Activated naive CD4-positive, alpha-beta T cell treated with anti-CD3 and anti-CD28 coated beads for 36 hours (primary cell): ENCODE measurements at regions of chr10 and their contacts with region 1.

Region 1: DNA sequence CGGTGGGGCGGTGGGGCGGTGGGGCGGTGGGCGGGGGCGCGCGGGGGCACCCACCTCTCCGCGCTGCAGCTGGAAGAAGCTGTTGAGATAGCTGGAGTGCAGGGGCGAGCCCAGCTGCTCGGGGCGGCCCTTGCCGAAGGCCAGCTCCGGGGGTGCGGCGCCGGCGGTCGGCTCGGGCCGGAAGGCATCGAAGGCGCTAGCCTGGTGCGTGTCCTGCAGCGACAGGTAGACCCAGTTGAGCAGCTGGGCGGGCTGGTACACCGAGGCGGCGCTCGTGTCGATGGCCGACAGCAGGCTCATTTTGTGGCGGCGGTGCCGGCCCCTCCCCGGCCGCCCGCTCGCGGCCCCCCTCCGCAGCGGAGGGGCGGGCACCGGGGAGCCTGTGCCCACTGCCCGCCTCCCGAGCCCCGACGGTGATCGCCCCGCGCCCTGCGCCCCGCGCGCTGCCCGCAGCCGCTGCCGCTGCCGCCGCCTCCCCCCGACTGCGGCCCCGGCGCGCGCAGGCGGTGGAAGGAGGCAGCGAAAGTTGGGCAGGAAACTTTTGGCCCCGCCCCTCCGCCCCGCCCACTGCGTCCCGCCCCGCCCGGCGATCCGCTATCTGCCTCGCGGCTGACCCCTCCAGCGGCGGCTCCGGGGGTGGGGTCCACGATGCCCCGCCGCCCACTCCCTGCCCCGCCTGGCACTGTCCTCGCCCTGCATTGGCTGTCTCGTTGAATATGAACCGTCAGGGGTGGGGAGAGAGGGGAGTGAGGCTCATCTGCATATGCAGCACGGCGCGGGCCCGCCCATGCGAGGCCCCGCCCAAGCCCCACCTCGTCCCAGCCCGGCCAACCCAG is at the start of gene ZCCHC24:
- DNase-seq: peak; percentile 92
- H3K4me3 Mint-ChIP-seq: peak within 1 kb of the TSS; percentile 70
- H3K27ac Mint-ChIP-seq: no peak within 1 kb of the TSS
- H3K4me1 Mint-ChIP-seq: peaks cover 21% of the 10 kb centered on the region
- H3K27me3 Mint-ChIP-seq: peaks cover 12% of the 10 kb centered on the region
- total RNA-seq, gene ZCCHC24: 0.52 to 0.69 TPM

Region 2: GRCh38 chr10:79242620-79243152 is 202.7 kb before region 1 on chr10:
- CTCF ChIA-PET with region 1: no interaction called
- intact Hi-C with region 1: loop called (anchors 2 kb)
- DNase-seq: peak; percentile 69
- H3K4me3 Mint-ChIP-seq: peak overlapping the region; percentile 78
- H3K27ac Mint-ChIP-seq: peak overlapping the region; percentile 56
- H3K4me1 Mint-ChIP-seq: peaks cover 45% of the 10 kb centered on the region
- H3K27me3 Mint-ChIP-seq: no peaks in the 10 kb centered on the region